ENCODE measurements at regions of chr3 and their contacts with region 1.

Region 1: GRCh38 chr3:184371570-184372018 is 6.4 kb downstream of the THPO start:
- DNase-seq: peak; percentile 71 to 80 (median 71)
- H3K4me3 ChIP-seq: no peak overlapping the region
- H3K4me3 Mint-ChIP-seq: no peak overlapping the region
- H3K27ac ChIP-seq: no peak overlapping the region
- H3K27ac Mint-ChIP-seq: no peak overlapping the region
- H3K4me1 ChIP-seq: peaks cover 0 to 6% of the 10 kb centered on the region in 2 donors
- H3K4me1 Mint-ChIP-seq: peaks cover 8% of the 10 kb centered on the region
- H3K27me3 ChIP-seq: peaks cover 0 to 16% of the 10 kb centered on the region in 2 donors
- H3K27me3 Mint-ChIP-seq: peaks cover 16 to 40% (median 29%) of the 10 kb centered on the region in 3 donors
- CTCF ChIP-seq: peak; percentile 95

Region 2: GRCh38 chr3:184209146-184209923 is 162.3 kb before region 1 on chr3:
- intact Hi-C with region 1: no loop called
- DNase-seq: no peak
- H3K4me3 ChIP-seq: no peak overlapping the region
- H3K4me3 Mint-ChIP-seq: no peak overlapping the region
- H3K27ac ChIP-seq: no peak overlapping the region
- H3K27ac Mint-ChIP-seq: no peak overlapping the region
- H3K4me1 ChIP-seq: no peaks in the 10 kb centered on the region
- H3K4me1 Mint-ChIP-seq: no peaks in the 10 kb centered on the region
- H3K27me3 ChIP-seq: no peaks in the 10 kb centered on the region
- H3K27me3 Mint-ChIP-seq: peaks cover 20 to 30% (median 20%) of the 10 kb centered on the region in 3 donors
- CTCF ChIP-seq: no peak

Region 3: DNA sequence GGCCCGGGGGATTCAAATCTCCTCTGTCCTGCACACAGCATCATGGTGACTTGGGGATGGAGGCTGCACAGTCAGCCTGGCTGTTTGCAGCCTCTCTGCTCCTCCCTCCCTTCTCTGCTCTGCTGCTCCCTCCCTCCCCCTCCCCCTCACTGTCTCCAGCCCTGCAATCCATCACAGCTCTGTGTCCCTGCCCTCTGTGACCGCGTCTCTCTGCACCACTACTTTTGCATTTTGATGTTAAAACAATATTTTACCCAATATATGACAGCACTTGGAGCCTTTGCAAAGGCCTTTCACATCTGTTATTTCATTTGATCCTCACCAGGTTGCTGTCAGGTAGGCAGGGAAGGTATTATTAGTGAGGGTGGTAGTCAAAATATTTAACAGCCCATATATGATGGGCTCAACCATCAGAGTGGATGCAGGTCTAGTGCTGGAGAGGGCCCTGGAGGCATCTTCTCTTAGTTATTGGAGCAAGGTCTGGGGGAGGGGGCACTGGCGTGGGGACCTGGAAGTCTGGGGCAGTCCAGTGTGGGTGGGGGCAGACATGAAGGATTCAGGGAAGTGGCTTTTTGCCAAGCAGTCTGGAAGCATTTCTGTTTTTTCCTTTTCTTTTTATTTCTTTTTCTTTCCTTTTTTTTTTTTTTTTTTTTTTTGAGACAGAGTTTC is 424.1 kb after region 1 on chr3:
- intact Hi-C with region 1: loop called in 1 of 2 experiments (anchors 10 kb)
- DNase-seq: no peak
- H3K4me3 ChIP-seq: no peak overlapping the region
- H3K4me3 Mint-ChIP-seq: no peak overlapping the region
- H3K27ac ChIP-seq: no peak overlapping the region
- H3K27ac Mint-ChIP-seq: no peak overlapping the region
- H3K4me1 ChIP-seq: peaks cover 17 to 19% of the 10 kb centered on the region in 2 donors
- H3K4me1 Mint-ChIP-seq: peaks cover 27% of the 10 kb centered on the region
- H3K27me3 ChIP-seq: no peaks in the 10 kb centered on the region
- H3K27me3 Mint-ChIP-seq: peaks cover 0 to 8% (median 6%) of the 10 kb centered on the region in 3 donors
- CTCF ChIP-seq: no peak

Region 4: GRCh38 chr3:184842433-184842832 is 470.8 kb after region 1 on chr3:
- intact Hi-C with region 1: no loop called
- DNase-seq: no peak
- H3K4me3 ChIP-seq: no peak overlapping the region
- H3K4me3 Mint-ChIP-seq: no peak overlapping the region
- H3K27ac ChIP-seq: no peak overlapping the region
- H3K27ac Mint-ChIP-seq: no peak overlapping the region
- H3K4me1 ChIP-seq: no peaks in the 10 kb centered on the region
- H3K4me1 Mint-ChIP-seq: peaks cover 8% of the 10 kb centered on the region
- H3K27me3 ChIP-seq: no peaks in the 10 kb centered on the region
- H3K27me3 Mint-ChIP-seq: no peaks in the 10 kb centered on the region
- CTCF ChIP-seq: no peak